Activated CD4-positive, alpha-beta T cell treated with anti-CD3 and anti-CD28 coated beads for 36 hours (primary cell): ENCODE measurements at regions of chr3 and their contacts with region 1.

Region 1: GRCh38 chr3:71305231-71306206 is 278.0 kb downstream of the FOXP1 start:
- DNase-seq: peak; percentile 38
- ATAC-seq: peak; percentile 8
- H3K4me3 Mint-ChIP-seq: peak overlapping the region; percentile 80
- H3K27ac Mint-ChIP-seq: peak overlapping the region; percentile 96
- H3K4me1 Mint-ChIP-seq: peaks cover 81% of the 10 kb centered on the region
- H3K27me3 Mint-ChIP-seq: no peaks in the 10 kb centered on the region

Region 2: DNA sequence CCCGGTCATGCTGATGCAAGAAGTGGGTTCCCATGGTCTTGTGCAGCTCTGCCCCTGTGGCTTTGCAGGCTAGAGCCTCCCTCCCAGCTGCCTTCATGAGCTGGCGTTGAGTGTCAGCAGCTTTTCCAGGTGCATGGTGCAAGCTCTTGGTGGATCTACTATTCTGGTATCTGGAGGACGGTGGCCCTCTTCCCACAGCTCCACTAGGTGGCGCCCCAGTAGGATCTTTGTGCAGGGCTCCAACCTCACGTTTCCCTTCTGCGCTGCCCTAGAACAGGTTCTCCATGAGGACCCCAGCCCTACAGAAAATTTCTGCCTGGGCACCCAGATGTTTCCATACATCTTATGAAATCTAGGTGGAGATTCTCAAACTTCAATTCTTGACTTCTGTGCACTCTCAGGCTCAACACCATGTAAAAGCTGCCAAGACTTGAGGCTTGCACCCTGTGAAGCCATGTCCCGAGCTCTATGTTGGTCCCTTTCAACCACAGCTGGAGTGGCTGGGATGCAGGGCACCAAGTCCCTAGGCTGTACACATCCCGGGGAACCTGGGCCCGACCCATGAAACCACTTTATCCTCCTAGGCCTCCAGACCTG is 754.7 kb before region 1 on chr3:
- CTCF ChIA-PET with region 1: interaction called, 3 read pairs
- POLR2A ChIA-PET with region 1: no interaction called
- intact Hi-C with region 1: loop called (anchors 2 to 10 kb)
- DNase-seq: peak; percentile 88
- ATAC-seq: peak; percentile 91
- H3K4me3 Mint-ChIP-seq: no peak overlapping the region
- H3K27ac Mint-ChIP-seq: no peak overlapping the region
- H3K4me1 Mint-ChIP-seq: peaks cover 4% of the 10 kb centered on the region
- H3K27me3 Mint-ChIP-seq: peaks cover 2% of the 10 kb centered on the region

Region 3: DNA sequence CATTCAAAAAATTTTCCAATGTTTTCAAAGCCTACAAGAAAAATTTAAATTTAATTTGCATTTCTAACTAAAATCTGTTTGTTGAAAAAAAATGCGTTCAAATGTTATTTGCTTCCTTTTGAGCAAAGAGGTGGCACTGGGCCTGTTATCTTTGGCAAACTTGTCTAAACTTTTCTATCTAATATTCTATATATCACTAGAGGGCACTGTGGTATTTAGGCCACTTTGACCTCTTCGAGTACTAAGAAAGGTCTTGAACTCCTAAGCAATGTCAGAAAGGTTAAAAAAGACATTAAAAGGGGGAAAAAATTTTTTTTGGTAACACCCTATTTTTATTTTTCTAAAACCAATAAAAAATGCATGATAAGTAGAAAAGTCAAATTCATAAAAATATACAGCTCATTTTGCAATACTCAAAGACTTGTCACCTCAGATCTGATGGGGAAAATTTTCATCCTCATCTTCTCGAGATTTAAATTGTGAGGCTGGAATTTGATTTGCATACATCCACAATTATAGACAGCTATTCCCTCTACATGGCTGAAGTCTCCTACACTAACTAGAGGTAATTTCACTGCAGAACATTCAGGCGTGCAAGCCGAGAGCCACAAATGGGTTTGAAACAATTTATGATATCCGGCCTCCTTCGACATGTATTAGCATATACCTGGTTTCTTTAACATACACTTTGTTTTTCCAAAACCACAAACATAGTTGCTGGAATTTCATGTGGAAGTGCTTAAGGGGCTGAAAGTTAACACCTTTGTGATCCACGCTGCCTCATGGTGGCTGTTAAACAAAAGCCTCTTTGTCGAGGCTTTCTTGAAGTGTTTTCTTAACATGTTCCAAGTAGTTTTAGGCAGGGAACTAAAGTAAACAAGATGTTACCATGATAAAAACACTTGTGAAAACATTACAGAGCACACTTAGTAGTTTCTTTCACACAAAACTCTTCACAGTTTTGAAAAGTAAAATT is 298.4 kb before region 1 on chr3:
- CTCF ChIA-PET with region 1: interaction called, 4 read pairs
- POLR2A ChIA-PET with region 1: no interaction called
- intact Hi-C with region 1: loop called (anchors 1 to 2 kb)
- DNase-seq: no peak
- ATAC-seq: no peak
- H3K4me3 Mint-ChIP-seq: no peak overlapping the region
- H3K27ac Mint-ChIP-seq: peak overlapping the region; percentile 79
- H3K4me1 Mint-ChIP-seq: peaks cover 79% of the 10 kb centered on the region
- H3K27me3 Mint-ChIP-seq: no peaks in the 10 kb centered on the region

Region 4: DNA sequence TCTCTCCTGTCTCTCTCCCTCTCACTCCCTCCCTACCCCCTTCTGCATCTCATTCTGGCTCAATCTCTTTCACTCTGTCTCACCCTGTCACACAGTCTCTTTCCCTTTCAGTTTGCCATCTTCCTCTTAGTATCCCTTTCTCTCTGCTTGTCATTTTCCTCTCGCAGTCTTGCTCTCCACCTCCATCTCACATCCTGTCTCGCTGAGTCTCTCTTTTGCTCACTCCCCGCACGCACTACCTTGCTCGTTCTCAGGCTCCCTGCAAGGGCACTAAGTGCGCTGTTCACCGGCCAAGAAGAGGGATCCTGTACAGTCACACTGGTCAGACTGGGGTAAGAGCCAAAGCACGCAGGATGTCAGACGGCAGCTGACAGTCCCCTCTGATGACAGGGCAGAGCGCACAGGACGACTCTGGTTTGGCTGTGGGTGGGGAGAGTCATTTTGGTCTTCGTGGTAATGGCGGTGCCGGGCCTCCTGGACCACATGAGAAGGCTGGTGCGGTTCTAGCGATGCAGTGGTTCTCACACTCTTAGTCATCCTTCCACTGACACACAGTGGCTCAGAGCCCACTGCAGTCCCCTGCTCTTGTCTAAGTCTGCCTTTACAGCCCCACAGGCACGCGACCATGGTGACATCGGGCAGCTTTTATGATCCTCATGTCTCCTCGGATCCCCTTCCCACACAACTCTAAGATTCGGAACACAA is 78.8 kb before region 1 on chr3:
- CTCF ChIA-PET with region 1: interaction called, 4 read pairs
- POLR2A ChIA-PET with region 1: interaction called, 4 read pairs
- intact Hi-C with region 1: loop called (anchors 1 kb)
- DNase-seq: peak; percentile 95
- ATAC-seq: peak; percentile 89
- H3K4me3 Mint-ChIP-seq: peak overlapping the region; percentile 78
- H3K27ac Mint-ChIP-seq: peak overlapping the region; percentile 97
- H3K4me1 Mint-ChIP-seq: peaks cover 88% of the 10 kb centered on the region
- H3K27me3 Mint-ChIP-seq: no peaks in the 10 kb centered on the region

Region 5: DNA sequence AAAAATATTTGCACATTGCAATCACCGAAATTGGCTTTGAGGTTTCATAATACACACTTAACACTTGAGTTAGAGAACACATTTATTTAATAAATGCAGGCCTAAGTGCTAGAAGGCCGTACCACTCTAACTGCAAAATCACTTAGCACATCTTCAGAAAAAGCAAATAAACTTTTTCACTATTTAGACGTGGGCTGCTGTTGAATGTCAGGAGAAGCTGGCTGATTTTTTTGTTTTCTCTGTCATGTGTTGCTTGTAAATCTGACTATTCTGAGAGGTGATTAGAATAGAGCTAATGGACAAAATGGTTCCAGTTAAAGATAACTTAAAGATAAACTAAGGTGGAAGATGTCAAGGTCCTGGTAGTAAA is 12.9 kb after region 1 on chr3:
- CTCF ChIA-PET with region 1: no interaction called
- POLR2A ChIA-PET with region 1: no interaction called
- intact Hi-C with region 1: no loop called
- DNase-seq: no peak
- ATAC-seq: no peak
- H3K4me3 Mint-ChIP-seq: no peak overlapping the region
- H3K27ac Mint-ChIP-seq: no peak overlapping the region
- H3K4me1 Mint-ChIP-seq: peaks cover 40% of the 10 kb centered on the region
- H3K27me3 Mint-ChIP-seq: no peaks in the 10 kb centered on the region

Region 6: GRCh38 chr3:71332813-71333212 is 27.3 kb after region 1 on chr3:
- CTCF ChIA-PET with region 1: no interaction called
- POLR2A ChIA-PET with region 1: no interaction called
- intact Hi-C with region 1: no loop called
- DNase-seq: no peak
- ATAC-seq: no peak
- H3K4me3 Mint-ChIP-seq: no peak overlapping the region
- H3K27ac Mint-ChIP-seq: no peak overlapping the region
- H3K4me1 Mint-ChIP-seq: peaks cover 17% of the 10 kb centered on the region
- H3K27me3 Mint-ChIP-seq: no peaks in the 10 kb centered on the region

Region 7: DNA sequence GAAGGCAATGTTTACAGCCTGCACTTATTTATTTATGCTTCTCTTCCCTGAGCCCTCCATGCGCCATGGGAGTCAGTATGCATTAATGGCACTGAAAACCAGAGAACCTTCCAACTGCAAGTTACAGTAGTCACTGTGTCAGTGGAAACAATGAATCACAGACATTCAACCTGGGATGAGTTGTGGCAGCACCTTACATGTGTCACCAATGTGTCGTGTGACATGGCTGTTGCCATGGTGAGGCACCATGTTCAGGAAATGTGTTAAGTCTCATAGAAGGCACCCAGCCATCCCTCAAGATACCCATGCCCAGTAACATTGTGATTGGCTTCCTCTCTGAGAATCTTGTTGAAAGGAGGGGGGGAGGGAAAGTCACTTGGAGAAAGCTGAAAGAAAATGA is 173.0 kb after region 1 on chr3:
- CTCF ChIA-PET with region 1: no interaction called
- POLR2A ChIA-PET with region 1: no interaction called
- intact Hi-C with region 1: loop called in 1 of 2 experiments (anchors 1 kb)
- DNase-seq: peak; percentile 89
- ATAC-seq: peak; percentile 98
- H3K4me3 Mint-ChIP-seq: peak overlapping the region; percentile 19
- H3K27ac Mint-ChIP-seq: peak overlapping the region; percentile 93
- H3K4me1 Mint-ChIP-seq: peaks cover 78% of the 10 kb centered on the region
- H3K27me3 Mint-ChIP-seq: no peaks in the 10 kb centered on the region

Region 8: DNA sequence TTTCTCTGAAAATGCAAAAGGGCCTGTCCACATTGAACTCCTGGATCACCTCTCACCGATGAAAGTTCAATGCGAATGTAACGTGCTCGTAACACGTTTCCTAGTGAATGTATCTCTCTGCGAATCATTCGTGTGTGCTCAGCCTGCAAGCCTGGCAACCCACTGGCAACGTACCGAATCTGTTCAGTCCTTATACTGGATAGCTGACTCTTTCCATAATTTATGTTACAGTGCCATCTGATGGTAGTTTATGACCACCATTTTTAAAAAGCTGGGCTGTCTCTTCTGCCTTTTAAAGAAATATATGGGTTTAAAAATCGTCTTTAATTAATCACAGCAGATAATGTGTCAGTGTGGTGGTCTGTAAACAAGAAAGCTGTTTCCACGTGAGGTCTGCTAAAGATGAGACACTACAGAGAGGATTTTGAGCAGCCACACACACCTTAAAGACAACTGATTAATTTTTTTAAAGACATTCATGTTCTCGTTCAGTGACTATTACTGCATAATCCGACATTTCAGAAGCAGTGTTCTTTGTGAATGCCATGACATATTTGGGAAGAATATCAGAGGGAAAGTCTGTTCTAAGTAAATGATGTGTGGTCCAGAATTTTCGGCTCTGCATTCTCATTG is 347.4 kb after region 1 on chr3:
- CTCF ChIA-PET with region 1: no interaction called
- POLR2A ChIA-PET with region 1: no interaction called
- intact Hi-C with region 1: loop called in 1 of 2 experiments (anchors 5 kb)
- DNase-seq: peak; percentile 55
- ATAC-seq: peak; percentile 80
- H3K4me3 Mint-ChIP-seq: no peak overlapping the region
- H3K27ac Mint-ChIP-seq: no peak overlapping the region
- H3K4me1 Mint-ChIP-seq: peaks cover 5% of the 10 kb centered on the region
- H3K27me3 Mint-ChIP-seq: no peaks in the 10 kb centered on the region